ENCODE measurements at regions of chr13 and their contacts with region 1.

Region 1: DNA sequence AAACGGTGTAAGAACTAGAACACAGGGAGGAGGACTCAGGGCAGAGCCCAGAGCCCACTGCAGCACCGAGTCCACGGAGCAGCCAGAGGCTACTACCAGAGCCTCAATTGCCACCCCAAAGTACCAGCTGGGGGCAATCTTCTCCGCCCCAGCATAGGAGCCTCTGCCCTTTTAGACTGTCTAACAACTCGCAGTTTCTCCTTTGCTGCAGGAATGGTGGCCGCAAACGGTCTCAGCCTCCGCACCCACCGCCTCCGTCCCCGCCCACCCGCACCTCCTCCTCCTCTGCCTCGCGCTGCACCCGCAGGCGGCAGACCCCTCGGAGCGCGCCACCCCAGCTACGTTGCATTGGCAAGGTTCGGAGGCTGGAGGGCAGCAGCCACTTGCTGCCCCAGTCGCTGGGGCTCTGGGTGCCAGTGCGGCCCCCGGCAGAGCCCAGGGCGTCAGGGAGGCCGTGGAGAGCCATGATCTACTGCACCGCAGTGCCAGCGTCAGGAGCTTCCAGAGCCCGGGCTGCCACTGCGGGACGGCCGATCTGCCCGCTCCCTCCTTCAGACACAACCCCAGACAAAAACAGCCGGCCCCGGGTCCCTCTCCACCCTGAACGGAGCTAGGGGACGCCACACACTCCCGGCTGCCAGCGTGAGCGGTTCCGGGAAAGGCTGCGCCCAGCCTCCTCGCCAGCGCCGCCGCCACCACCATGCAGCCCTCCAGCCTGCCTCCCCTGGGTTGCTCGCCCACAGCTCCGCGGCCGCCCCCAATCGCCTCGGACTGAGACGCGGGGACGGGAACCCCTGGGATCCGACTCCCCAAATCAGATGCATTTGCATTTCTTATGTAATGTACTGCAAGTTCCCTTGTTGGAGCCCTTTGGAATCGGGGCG is 1.8 kb downstream of the FGF14 start:
- DNase-seq: no peak
- ATAC-seq: peak; percentile 32
- H3K4me3 Mint-ChIP-seq: peak overlapping the region; percentile 67
- H3K27ac Mint-ChIP-seq: no peak overlapping the region
- H3K4me1 Mint-ChIP-seq: peaks cover 31% of the 10 kb centered on the region
- H3K27me3 Mint-ChIP-seq: peaks cover 39% of the 10 kb centered on the region
- CTCF ChIP-seq: no peak

Region 2: DNA sequence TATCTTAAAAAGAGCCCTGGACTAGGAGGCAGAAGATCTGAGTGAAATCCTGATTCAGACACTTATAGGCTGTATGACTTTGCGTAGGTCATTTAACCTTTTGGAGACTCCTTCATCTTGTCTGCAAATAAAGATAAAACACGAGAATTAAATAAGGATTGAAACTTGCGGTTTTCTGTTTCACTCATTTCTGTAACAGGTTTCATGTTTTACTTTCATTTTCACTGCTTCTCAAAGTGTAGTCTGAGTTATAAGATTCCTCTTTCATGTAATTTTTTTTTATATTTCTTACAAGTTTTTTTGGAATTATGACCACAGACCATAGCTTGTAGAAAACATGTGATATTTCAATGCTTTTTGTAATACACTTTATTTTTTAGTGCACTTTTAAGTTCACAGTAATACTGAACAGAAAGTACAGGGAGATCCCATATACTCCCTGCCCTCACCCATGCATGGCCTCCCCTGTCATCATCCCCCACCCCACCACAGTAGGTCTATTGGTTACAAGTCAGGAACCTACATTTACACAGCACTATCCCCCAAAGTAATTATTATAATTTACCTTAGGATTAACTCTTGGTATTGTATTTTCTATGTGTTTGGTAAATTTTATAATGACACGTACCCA is 773.0 kb before region 1 on chr13:
- CTCF ChIA-PET with region 1: no interaction called
- POLR2A ChIA-PET with region 1: no interaction called
- intact Hi-C with region 1: loop called (anchors 2 kb)
- DNase-seq: no peak
- ATAC-seq: peak; percentile 88
- H3K4me3 Mint-ChIP-seq: peak overlapping the region; percentile 68
- H3K27ac Mint-ChIP-seq: peak overlapping the region; percentile 64
- H3K4me1 Mint-ChIP-seq: peaks cover 44% of the 10 kb centered on the region
- H3K27me3 Mint-ChIP-seq: peaks cover 2% of the 10 kb centered on the region
- CTCF ChIP-seq: no peak

Region 3: GRCh38 chr13:103388839-103389238 is 988.8 kb after region 1 on chr13:
- CTCF ChIA-PET with region 1: no interaction called
- POLR2A ChIA-PET with region 1: no interaction called
- intact Hi-C with region 1: no loop called
- DNase-seq: no peak
- ATAC-seq: no peak
- H3K4me3 Mint-ChIP-seq: no peak overlapping the region
- H3K27ac Mint-ChIP-seq: no peak overlapping the region
- H3K4me1 Mint-ChIP-seq: no peaks in the 10 kb centered on the region
- H3K27me3 Mint-ChIP-seq: no peaks in the 10 kb centered on the region
- CTCF ChIP-seq: no peak